ENCODE measurements at regions of chr16 and their contacts with region 1.

Region 1: GRCh38 chr16:23434380-23434779 is 18.6 kb downstream of the COG7 start:
- DNase-seq: no peak
- H3K4me3 ChIP-seq: no peak overlapping the region
- H3K27ac ChIP-seq: peak overlapping the region in 2 of 4 donors; percentile 70 to 82
- H3K4me1 ChIP-seq: peaks cover 6 to 28% (median 7%) of the 10 kb centered on the region in 3 donors
- H3K27me3 ChIP-seq: no peaks in the 10 kb centered on the region
- CTCF ChIP-seq: peak; percentile 81 to 94 (median 88)
- POLR2A ChIP-seq: no peak

Region 2: GRCh38 chr16:23182460-23183309 is 251.7 kb before region 1 on chr16 and contains the start of gene SCNN1G:
- intact Hi-C with region 1: loop called (anchors 5 kb)
- DNase-seq: no peak
- H3K4me3 ChIP-seq: peak within 1 kb of the TSS; percentile 50 to 79 (median 62)
- H3K27ac ChIP-seq: peak within 1 kb of the TSS in 3 of 4 donors; percentile 29 to 68 (median 62)
- H3K4me1 ChIP-seq: peaks cover 8 to 50% (median 11%) of the 10 kb centered on the region in 3 donors
- H3K27me3 ChIP-seq: peaks cover 0 to 54% (median 5%) of the 10 kb centered on the region in 4 donors
- CTCF ChIP-seq: peak; percentile 84 to 100 (median 98)
- POLR2A ChIP-seq: peak in 1 of 4 donors; percentile 21
- total RNA-seq, gene SCNN1G: 5.0 to 10.8 (median 7.0) TPM

Measured in esophagus squamous epithelium (tissue), 5 donors.